CD8-positive, alpha-beta T cell (primary cell): ENCODE measurements at regions of chr7 and their contacts with region 1.

Region 1: GRCh38 chr7:992709-993607 is 10.0 kb downstream of the CYP2W1 start:
- DNase-seq: peak; percentile 88 to 96 (median 95)
- ATAC-seq: peak; percentile 99
- H3K4me3 ChIP-seq: no peak overlapping the region
- H3K4me3 Mint-ChIP-seq: no peak overlapping the region
- H3K27ac ChIP-seq: no peak overlapping the region
- H3K27ac Mint-ChIP-seq: no peak overlapping the region
- H3K4me1 ChIP-seq: peaks cover 4% of the 10 kb centered on the region
- H3K4me1 Mint-ChIP-seq: peaks cover 4% of the 10 kb centered on the region
- H3K27me3 ChIP-seq: no peaks in the 10 kb centered on the region
- H3K27me3 Mint-ChIP-seq: no peaks in the 10 kb centered on the region
- CTCF ChIP-seq: peak; percentile 97

Region 2: DNA sequence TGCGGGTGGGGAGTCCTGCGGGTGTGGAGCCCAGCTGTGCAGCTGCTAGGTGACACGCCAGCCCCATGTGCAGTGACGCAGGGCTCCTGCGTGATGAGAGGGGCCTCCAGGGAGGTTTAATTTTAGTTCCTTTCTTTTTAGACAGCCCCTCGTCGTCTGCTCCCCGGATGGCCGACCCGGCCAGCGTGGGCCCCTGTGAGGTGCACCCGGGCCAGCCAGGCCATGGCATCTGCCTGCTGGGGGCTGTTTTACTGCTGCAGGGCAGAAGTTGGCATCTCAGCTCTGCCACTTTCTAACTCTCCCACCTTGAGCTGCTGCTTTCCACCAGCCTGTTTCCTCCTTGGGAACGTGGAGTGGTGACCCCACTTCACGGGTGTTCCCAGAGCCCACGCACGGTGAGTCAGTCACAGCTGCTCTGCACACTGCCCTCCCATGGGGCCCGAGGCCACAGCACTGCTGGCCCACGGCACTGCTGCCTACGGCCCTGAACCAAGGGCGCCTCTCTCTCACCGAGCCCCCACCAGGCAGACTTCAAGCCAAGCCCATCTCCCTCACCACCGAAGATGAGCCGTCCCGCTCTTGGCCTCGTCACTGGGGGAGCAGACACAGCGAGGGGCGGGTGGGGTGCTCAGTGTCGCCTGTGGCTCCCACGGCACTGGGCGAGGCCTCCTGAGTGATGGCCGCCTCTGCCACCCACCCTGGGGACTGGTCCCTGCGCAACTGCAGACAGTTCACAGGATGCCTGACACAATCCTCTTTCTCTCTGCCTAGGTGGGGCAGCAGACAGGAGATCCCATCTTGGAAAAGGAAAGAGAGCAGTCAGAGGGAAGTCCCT is 11.3 kb after region 1 on chr7:
- CTCF ChIA-PET with region 1: interaction called, 21 read pairs
- POLR2A ChIA-PET with region 1: no interaction called
- intact Hi-C with region 1: no loop called
- DNase-seq: no peak
- ATAC-seq: no peak
- H3K4me3 ChIP-seq: no peak overlapping the region
- H3K4me3 Mint-ChIP-seq: no peak overlapping the region
- H3K27ac ChIP-seq: no peak overlapping the region
- H3K27ac Mint-ChIP-seq: no peak overlapping the region
- H3K4me1 ChIP-seq: no peaks in the 10 kb centered on the region
- H3K4me1 Mint-ChIP-seq: no peaks in the 10 kb centered on the region
- H3K27me3 ChIP-seq: no peaks in the 10 kb centered on the region
- H3K27me3 Mint-ChIP-seq: no peaks in the 10 kb centered on the region
- CTCF ChIP-seq: no peak

Region 3: GRCh38 chr7:1053002-1053478 is 60.1 kb after region 1 on chr7:
- CTCF ChIA-PET with region 1: interaction called, 30 read pairs
- POLR2A ChIA-PET with region 1: interaction called, 3 read pairs
- intact Hi-C with region 1: no loop called
- DNase-seq: no peak
- ATAC-seq: no peak
- H3K4me3 ChIP-seq: no peak overlapping the region
- H3K4me3 Mint-ChIP-seq: no peak overlapping the region
- H3K27ac ChIP-seq: no peak overlapping the region
- H3K27ac Mint-ChIP-seq: no peak overlapping the region
- H3K4me1 ChIP-seq: peaks cover 41% of the 10 kb centered on the region
- H3K4me1 Mint-ChIP-seq: peaks cover 28% of the 10 kb centered on the region
- H3K27me3 ChIP-seq: no peaks in the 10 kb centered on the region
- H3K27me3 Mint-ChIP-seq: no peaks in the 10 kb centered on the region
- CTCF ChIP-seq: no peak

Region 4: GRCh38 chr7:1076181-1077072 is 83.5 kb after region 1 on chr7:
- CTCF ChIA-PET with region 1: interaction called, 22 read pairs
- POLR2A ChIA-PET with region 1: no interaction called
- intact Hi-C with region 1: no loop called
- DNase-seq: no peak
- ATAC-seq: no peak
- H3K4me3 ChIP-seq: no peak overlapping the region
- H3K4me3 Mint-ChIP-seq: no peak overlapping the region
- H3K27ac ChIP-seq: no peak overlapping the region
- H3K27ac Mint-ChIP-seq: no peak overlapping the region
- H3K4me1 ChIP-seq: no peaks in the 10 kb centered on the region
- H3K4me1 Mint-ChIP-seq: no peaks in the 10 kb centered on the region
- H3K27me3 ChIP-seq: no peaks in the 10 kb centered on the region
- H3K27me3 Mint-ChIP-seq: no peaks in the 10 kb centered on the region
- CTCF ChIP-seq: no peak

Region 5: GRCh38 chr7:1159891-1160668 is 167.1 kb after region 1 on chr7 and contains the start of gene ZFAND2A:
- CTCF ChIA-PET with region 1: interaction called, 13 read pairs
- POLR2A ChIA-PET with region 1: no interaction called
- intact Hi-C with region 1: no loop called
- DNase-seq: peak; percentile 97 to 99 (median 99)
- ATAC-seq: peak; percentile 98
- H3K4me3 ChIP-seq: peak within 1 kb of the TSS; percentile 98
- H3K4me3 Mint-ChIP-seq: peak within 1 kb of the TSS; percentile 90
- H3K27ac ChIP-seq: peak within 1 kb of the TSS; percentile 96 to 99
- H3K27ac Mint-ChIP-seq: peak within 1 kb of the TSS; percentile 95
- H3K4me1 ChIP-seq: peaks cover 22% of the 10 kb centered on the region
- H3K4me1 Mint-ChIP-seq: peaks cover 27% of the 10 kb centered on the region
- H3K27me3 ChIP-seq: no peaks in the 10 kb centered on the region
- H3K27me3 Mint-ChIP-seq: no peaks in the 10 kb centered on the region
- CTCF ChIP-seq: no peak
- total RNA-seq, gene ZFAND2A: 100 to 105 TPM

Region 6: DNA sequence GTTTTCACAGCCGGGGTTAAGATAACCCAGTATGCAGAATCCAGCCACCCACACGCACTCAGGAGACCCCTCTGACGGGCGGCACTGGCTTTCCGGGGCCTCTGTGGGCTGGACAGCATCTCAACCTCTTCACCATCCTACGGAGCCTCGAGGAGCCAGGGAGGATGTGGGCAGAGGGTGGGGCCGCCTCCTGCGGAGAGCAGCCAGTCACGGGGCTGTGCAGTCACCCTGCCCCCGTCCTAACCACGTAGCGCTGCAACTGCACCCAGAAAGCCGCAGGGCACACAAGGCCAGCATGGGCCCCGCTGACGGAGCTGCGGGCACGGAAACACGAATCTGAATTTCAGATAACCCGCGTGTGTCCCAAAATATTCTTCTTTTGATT is 947.4 kb after region 1 on chr7:
- CTCF ChIA-PET with region 1: no interaction called
- POLR2A ChIA-PET with region 1: no interaction called
- intact Hi-C with region 1: no loop called
- DNase-seq: peak; percentile 84 to 98 (median 90)
- ATAC-seq: peak; percentile 87
- H3K4me3 ChIP-seq: peak overlapping the region; percentile 65 to 90
- H3K4me3 Mint-ChIP-seq: peak overlapping the region; percentile 94
- H3K27ac ChIP-seq: peak overlapping the region; percentile 88 to 95
- H3K27ac Mint-ChIP-seq: peak overlapping the region; percentile 98
- H3K4me1 ChIP-seq: peaks cover 65% of the 10 kb centered on the region
- H3K4me1 Mint-ChIP-seq: peaks cover 67% of the 10 kb centered on the region
- H3K27me3 ChIP-seq: no peaks in the 10 kb centered on the region
- H3K27me3 Mint-ChIP-seq: no peaks in the 10 kb centered on the region
- CTCF ChIP-seq: no peak